ENCODE measurements at regions of chr2 and their contacts with region 1.

Region 1: DNA sequence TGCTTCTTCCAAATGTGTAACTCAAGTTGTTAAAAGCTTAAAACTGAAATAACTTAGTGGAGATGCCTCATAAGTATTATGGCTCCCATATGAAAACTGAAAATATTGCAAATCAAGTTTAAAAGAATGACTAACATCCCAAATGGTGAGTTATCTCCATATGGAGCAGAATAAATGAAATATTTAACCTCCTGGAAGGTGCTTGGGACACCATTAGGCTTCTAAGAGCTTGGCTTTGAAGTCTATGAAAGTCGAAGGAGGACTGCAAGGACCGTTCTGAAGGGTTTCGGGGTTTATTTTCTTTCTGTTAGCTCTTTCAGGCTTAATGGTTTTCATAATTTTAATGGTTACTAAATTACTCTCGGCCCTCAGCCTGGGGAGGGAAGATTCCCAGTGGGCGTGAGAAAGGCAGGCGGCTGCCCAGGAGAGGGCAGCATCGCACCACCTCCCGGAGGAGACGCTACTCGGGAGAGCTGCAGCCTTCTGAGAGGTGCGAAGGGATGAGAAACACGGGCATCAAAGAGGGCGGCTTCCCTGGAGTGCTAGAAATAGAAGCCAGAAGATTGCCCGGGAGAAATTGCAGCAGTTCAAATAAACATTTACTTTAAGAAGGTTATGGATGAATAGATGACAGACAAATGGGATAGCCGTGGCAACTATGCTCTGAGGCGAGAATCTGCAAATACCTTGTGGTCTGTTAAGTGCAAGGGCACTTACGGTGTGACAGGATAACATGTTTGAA is 43.1 kb downstream of the MAP3K19 start:
- DNase-seq: peak; percentile 65
- H3K4me3 ChIP-seq: no peak overlapping the region
- H3K27ac ChIP-seq: no peak overlapping the region
- H3K4me1 ChIP-seq: no peaks in the 10 kb centered on the region
- H3K27me3 ChIP-seq: no peaks in the 10 kb centered on the region
- CTCF ChIP-seq: peak; percentile 73 to 90 (median 78)
- POLR2A ChIP-seq: no peak

Region 2: DNA sequence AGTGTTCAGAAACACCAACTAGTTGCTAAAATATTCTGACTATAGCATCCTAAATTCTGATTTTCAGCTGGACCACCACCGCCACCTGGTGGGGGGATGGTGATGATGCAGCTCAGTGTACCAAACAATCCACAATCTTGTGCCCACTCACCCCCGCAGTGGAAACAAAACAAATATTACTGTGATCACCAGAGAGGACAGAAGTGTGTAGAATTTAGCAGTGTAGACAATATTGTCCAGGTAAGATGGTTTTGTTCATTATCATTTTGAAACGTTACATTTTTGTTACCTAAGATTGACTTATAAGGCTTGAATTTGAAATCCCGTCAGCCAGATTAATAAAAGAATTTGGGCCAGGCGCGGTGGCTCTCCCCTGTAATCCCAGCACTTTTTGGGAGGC is 705.8 kb after region 1 on chr2:
- intact Hi-C with region 1: loop called (anchors 2 kb)
- DNase-seq: peak; percentile 34
- H3K4me3 ChIP-seq: no peak overlapping the region
- H3K27ac ChIP-seq: no peak overlapping the region
- H3K4me1 ChIP-seq: no peaks in the 10 kb centered on the region
- H3K27me3 ChIP-seq: no peaks in the 10 kb centered on the region
- CTCF ChIP-seq: peak; percentile 84 to 94 (median 86)
- POLR2A ChIP-seq: no peak